ENCODE measurements at regions of chr2 and their contacts with region 1.

Region 1: DNA sequence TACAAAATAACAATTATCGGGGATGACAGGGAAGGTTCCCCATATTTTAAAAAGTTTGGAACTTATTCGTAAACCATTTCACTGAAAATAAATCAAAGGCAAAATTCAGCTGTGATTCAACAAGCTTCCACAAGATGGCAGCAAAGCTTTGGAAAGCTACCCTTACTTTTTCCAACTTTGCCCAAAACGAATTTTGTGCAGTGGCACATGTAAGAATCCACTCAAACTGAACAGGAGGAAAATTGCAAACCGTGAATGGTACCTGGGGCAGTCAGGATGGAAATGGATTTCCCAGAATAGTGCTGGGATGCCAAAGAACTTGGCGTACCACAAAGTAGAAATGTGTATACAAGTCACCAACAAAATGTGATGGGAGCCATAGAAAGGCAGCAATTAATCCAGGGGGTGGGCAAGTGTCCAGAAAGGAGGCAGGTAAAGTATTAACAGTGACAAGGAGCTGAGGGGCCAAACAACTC is 10.7 kb downstream of the RPL31 start:
- DNase-seq: no peak
- ATAC-seq: no peak
- H3K4me3 ChIP-seq: no peak overlapping the region
- H3K27ac ChIP-seq: no peak overlapping the region
- H3K4me1 ChIP-seq: no peaks in the 10 kb centered on the region
- H3K27me3 ChIP-seq: no peaks in the 10 kb centered on the region
- CTCF ChIP-seq: peak; percentile 67 to 90 (median 68); a peak in 5 of 6 replicates
- POLR2A ChIP-seq: no peak
- RAD21 ChIP-seq: peak; percentile 79

Region 2: GRCh38 chr2:101036562-101037457 is 24.1 kb after region 1 on chr2:
- CTCF ChIA-PET with region 1: interaction called, 10 read pairs
- POLR2A ChIA-PET with region 1: no interaction called
- RAD21 ChIA-PET with region 1: no interaction called
- intact Hi-C with region 1: no loop called
- DNase-seq: no peak
- ATAC-seq: peak; percentile 43; the same call in 1 of the 2 replicates
- H3K4me3 ChIP-seq: no peak overlapping the region
- H3K27ac ChIP-seq: no peak overlapping the region
- H3K4me1 ChIP-seq: no peaks in the 10 kb centered on the region
- H3K27me3 ChIP-seq: no peaks in the 10 kb centered on the region
- CTCF ChIP-seq: peak; percentile 36 to 63 (median 58); a peak in 5 of 6 replicates
- POLR2A ChIP-seq: no peak
- RAD21 ChIP-seq: peak; percentile 78

Region 3: DNA sequence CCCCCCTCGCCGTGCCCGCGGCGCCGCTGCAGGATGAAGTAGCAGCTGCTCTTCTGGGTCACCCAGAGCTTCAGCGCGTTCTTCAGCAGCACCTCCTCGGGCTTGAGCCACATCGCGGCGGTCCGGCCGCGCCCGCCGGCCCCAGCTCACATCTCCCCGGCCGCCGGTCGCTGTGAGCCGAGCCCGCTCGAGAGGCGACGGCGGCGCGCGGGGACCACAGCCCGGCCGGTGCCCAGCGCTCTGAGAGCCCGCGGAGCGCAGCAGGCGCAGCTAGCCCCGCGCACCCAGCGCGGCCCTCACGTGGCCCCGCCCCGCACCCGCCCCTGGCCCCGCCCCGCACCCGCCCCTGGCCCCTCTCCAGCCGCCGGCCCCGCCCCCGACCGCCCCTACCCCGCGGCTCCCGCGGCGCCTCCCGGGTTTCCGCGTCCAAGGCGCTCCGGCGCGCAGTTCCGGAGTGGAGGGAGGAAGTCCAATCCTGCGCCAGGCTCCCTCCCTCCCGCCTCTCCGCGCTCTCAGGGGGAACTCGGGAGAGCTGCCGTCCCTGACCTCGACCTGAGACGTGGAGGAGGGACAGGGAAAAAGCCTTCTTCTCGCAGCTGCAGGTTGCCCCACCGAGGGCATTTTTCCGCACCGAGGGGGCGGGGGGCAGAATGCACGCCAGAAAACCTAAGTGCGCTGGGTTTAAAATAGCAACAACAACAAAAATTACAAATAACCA is 138.6 kb after region 1 on chr2 and contains the start of gene TBC1D8:
- CTCF ChIA-PET with region 1: interaction called, 14 read pairs
- POLR2A ChIA-PET with region 1: no interaction called
- RAD21 ChIA-PET with region 1: interaction called, 3 to 4 read pairs
- intact Hi-C with region 1: loop called (anchors 1 kb)
- DNase-seq: peak; percentile 49
- ATAC-seq: peak; percentile 91
- H3K4me3 ChIP-seq: peak within 1 kb of the TSS; percentile 72 to 80
- H3K27ac ChIP-seq: peak within 1 kb of the TSS; percentile 81; the same call in 1 of the 2 replicates
- H3K4me1 ChIP-seq: peaks cover 23 to 57% of the 10 kb centered on the region in 2 experiments
- H3K27me3 ChIP-seq: no peaks in the 10 kb centered on the region
- CTCF ChIP-seq: no peak
- POLR2A ChIP-seq: peak; percentile 81
- RAD21 ChIP-seq: 0 out of 2 replicates have a peak, but pooled peaks have one; percentile 3
- total RNA-seq, gene TBC1D8: 44.0 TPM

Region 4: DNA sequence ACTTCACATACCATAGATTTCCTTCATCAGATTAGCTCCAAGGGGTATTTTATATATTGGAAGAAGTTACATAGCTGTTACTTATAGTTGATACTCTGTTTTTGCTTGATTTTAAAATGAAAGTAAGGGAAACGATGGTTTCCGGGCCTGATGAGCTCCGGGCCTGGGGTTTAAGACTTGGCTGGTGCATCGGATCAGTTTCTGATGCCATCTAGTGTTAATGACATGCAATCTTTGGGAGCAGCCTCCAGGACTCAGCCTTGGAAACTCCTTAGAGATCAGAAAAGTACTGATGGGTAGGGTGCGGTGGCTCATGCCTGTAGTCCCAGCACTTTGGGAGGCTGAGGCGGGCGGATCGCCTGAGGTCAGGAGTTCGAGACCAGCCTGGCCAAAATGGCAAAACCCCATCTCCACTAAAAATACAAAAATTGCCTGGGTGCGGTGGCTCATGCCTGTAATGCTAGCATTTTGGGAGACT is 192.8 kb after region 1 on chr2:
- CTCF ChIA-PET with region 1: interaction called, 31 read pairs
- POLR2A ChIA-PET with region 1: no interaction called
- RAD21 ChIA-PET with region 1: interaction called, 4 read pairs
- intact Hi-C with region 1: loop called (anchors 1 kb)
- DNase-seq: peak; percentile 91
- ATAC-seq: peak; percentile 97
- H3K4me3 ChIP-seq: peak overlapping the region; percentile 8 to 29
- H3K27ac ChIP-seq: peak overlapping the region; percentile 27; the same call in 1 of the 2 replicates
- H3K4me1 ChIP-seq: peaks cover 3 to 7% of the 10 kb centered on the region in 2 experiments; a peak in 2 of 4 replicates
- H3K27me3 ChIP-seq: no peaks in the 10 kb centered on the region
- CTCF ChIP-seq: peak; percentile 46 to 79 (median 64)
- POLR2A ChIP-seq: no peak
- RAD21 ChIP-seq: peak; percentile 87

Region 5: DNA sequence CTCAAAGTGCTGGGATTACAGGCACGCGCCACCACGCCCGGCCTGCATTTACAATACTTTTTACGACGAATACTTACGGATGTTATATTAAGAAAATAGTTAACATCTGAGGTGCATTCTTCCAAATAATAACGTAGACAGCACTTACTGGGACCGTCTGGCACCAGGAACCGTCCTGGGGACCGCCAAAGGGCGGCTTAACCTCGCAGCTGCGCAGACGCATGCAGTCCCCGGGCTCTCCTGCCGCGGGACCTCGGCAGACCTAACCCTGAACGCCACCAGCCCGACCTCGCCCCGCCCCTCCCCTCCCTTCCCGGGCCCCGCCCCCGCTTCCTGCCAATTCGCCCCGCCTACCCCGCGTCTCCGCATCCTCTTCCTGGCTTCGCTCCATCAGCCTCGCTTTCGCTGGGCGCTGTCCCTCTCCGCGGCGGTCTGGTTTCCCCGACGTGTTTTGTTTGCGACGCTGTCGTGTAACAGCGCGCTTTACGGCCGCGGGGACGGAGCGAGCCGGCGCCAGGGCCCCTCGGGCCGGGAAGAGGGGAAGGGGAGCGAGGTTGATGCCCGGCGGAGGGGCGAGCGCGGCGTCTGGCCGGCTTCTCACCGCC is 239.8 kb after region 1 on chr2 and contains the start of gene CNOT11:
- CTCF ChIA-PET with region 1: interaction called, 4 read pairs
- POLR2A ChIA-PET with region 1: no interaction called
- RAD21 ChIA-PET with region 1: no interaction called
- intact Hi-C with region 1: loop called (anchors 1 kb)
- DNase-seq: peak; percentile 97
- ATAC-seq: peak; percentile 90
- H3K4me3 ChIP-seq: peak within 1 kb of the TSS; percentile 84 to 91
- H3K27ac ChIP-seq: peak within 1 kb of the TSS; percentile 90
- H3K4me1 ChIP-seq: peaks cover 21 to 53% of the 10 kb centered on the region in 2 experiments
- H3K27me3 ChIP-seq: no peaks in the 10 kb centered on the region
- CTCF ChIP-seq: no peak
- POLR2A ChIP-seq: peak; percentile 89
- RAD21 ChIP-seq: no peak
- total RNA-seq, gene CNOT11: 57.8 TPM

Measured in HCT116 (cell line).